ENCODE measurements at regions of chr12 and their contacts with region 1.

Region 1: GRCh38 chr12:87216436-87216835 is 812.8 kb downstream of the C12orf50 start:
- DNase-seq: no peak
- ATAC-seq: no peak
- H3K4me3 ChIP-seq: no peak overlapping the region
- H3K27ac ChIP-seq: no peak overlapping the region
- H3K4me1 ChIP-seq: no peaks in the 10 kb centered on the region
- H3K27me3 ChIP-seq: no peaks in the 10 kb centered on the region
- CTCF ChIP-seq: no peak
- EP300 ChIP-seq: no peak
- POLR2A ChIP-seq: no peak
- RAD21 ChIP-seq: no peak

Region 2: GRCh38 chr12:87201598-87201997 is 14.8 kb before region 1 on chr12:
- CTCF ChIA-PET with region 1: no interaction called
- POLR2A ChIA-PET with region 1: no interaction called
- RAD21 ChIA-PET with region 1: no interaction called
- SMC1A ChIA-PET with region 1: no interaction called
- in situ Hi-C with region 1: no loop called
- intact Hi-C with region 1: no loop called
- DNase-seq: no peak
- ATAC-seq: no peak
- H3K4me3 ChIP-seq: no peak overlapping the region
- H3K27ac ChIP-seq: no peak overlapping the region
- H3K4me1 ChIP-seq: no peaks in the 10 kb centered on the region
- H3K27me3 ChIP-seq: no peaks in the 10 kb centered on the region
- CTCF ChIP-seq: no peak
- EP300 ChIP-seq: no peak
- POLR2A ChIP-seq: no peak
- RAD21 ChIP-seq: no peak

Region 3: DNA sequence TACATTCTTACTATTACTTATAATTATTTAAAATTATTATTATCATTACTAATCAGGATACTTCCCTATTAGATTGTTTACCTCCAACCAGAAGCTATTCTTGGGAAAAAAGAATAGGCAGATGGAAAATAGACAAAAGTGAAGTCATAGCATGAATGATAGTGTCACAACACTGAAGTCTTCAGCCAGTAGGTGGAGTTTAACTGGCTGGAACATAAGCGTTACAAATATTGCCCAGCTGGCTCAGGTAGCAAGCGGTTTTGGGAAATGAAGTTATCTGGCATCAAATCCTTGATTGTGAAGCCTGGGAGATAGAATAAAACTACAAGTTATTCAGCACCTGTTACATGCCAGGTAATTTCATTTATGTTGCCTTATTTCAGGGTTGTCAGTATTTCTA is 49.9 kb after region 1 on chr12:
- CTCF ChIA-PET with region 1: no interaction called
- POLR2A ChIA-PET with region 1: no interaction called
- RAD21 ChIA-PET with region 1: no interaction called
- SMC1A ChIA-PET with region 1: no interaction called
- in situ Hi-C with region 1: no loop called
- intact Hi-C with region 1: loop called (anchors 1 kb)
- DNase-seq: no peak
- ATAC-seq: peak; percentile 34; the same call in 1 of the 3 replicates
- H3K4me3 ChIP-seq: no peak overlapping the region
- H3K27ac ChIP-seq: no peak overlapping the region
- H3K4me1 ChIP-seq: no peaks in the 10 kb centered on the region
- H3K27me3 ChIP-seq: no peaks in the 10 kb centered on the region
- CTCF ChIP-seq: peak; percentile 5 to 25 (median 16); a peak in 2 of 6 replicates
- EP300 ChIP-seq: no peak
- POLR2A ChIP-seq: no peak
- RAD21 ChIP-seq: no peak